Activated naive CD4-positive, alpha-beta T cell treated with anti-CD3 and anti-CD28 coated beads for 36 hours (primary cell): ENCODE measurements at regions of chr9 and their contacts with region 1.

Region 1: GRCh38 chr9:78296893-78297671 is at the start of gene PSAT1:
- DNase-seq: peak; percentile 95
- H3K4me3 Mint-ChIP-seq: peak within 1 kb of the TSS; percentile 81
- H3K27ac Mint-ChIP-seq: peak within 1 kb of the TSS; percentile 94
- H3K4me1 Mint-ChIP-seq: peaks cover 40% of the 10 kb centered on the region
- H3K27me3 Mint-ChIP-seq: no peaks in the 10 kb centered on the region
- total RNA-seq, gene PSAT1: 235 to 240 TPM

Region 2: GRCh38 chr9:78235756-78236538 is 61.1 kb before region 1 on chr9 and contains the start of gene CEP78:
- CTCF ChIA-PET with region 1: interaction called, 4 read pairs
- intact Hi-C with region 1: loop called (anchors 1 kb)
- DNase-seq: peak; percentile 91
- H3K4me3 Mint-ChIP-seq: peak within 1 kb of the TSS; percentile 96
- H3K27ac Mint-ChIP-seq: peak within 1 kb of the TSS; percentile 91
- H3K4me1 Mint-ChIP-seq: peaks cover 34% of the 10 kb centered on the region
- H3K27me3 Mint-ChIP-seq: no peaks in the 10 kb centered on the region
- total RNA-seq, gene CEP78: 39.5 to 39.7 TPM

Region 3: GRCh38 chr9:78261403-78262001 is 35.6 kb before region 1 on chr9:
- CTCF ChIA-PET with region 1: interaction called, 3 read pairs
- intact Hi-C with region 1: loop called (anchors 2 kb)
- DNase-seq: no peak
- H3K4me3 Mint-ChIP-seq: no peak overlapping the region
- H3K27ac Mint-ChIP-seq: no peak overlapping the region
- H3K4me1 Mint-ChIP-seq: no peaks in the 10 kb centered on the region
- H3K27me3 Mint-ChIP-seq: no peaks in the 10 kb centered on the region